ENCODE measurements at regions of chr18 and their contacts with region 1.

Region 1: GRCh38 chr18:42053188-42053781 is 98.3 kb downstream of the PIK3C3 start:
- DNase-seq: peak; percentile 63
- H3K4me3 Mint-ChIP-seq: no peak overlapping the region
- H3K27ac Mint-ChIP-seq: no peak overlapping the region
- H3K4me1 Mint-ChIP-seq: peaks cover 9% of the 10 kb centered on the region
- H3K27me3 Mint-ChIP-seq: no peaks in the 10 kb centered on the region

Region 2: GRCh38 chr18:41938445-41938844 is 114.8 kb before region 1 on chr18:
- CTCF ChIA-PET with region 1: no interaction called
- POLR2A ChIA-PET with region 1: no interaction called
- intact Hi-C with region 1: no loop called
- DNase-seq: no peak
- H3K4me3 Mint-ChIP-seq: no peak overlapping the region
- H3K27ac Mint-ChIP-seq: no peak overlapping the region
- H3K4me1 Mint-ChIP-seq: peaks cover 9% of the 10 kb centered on the region
- H3K27me3 Mint-ChIP-seq: peaks cover 12% of the 10 kb centered on the region

Region 3: GRCh38 chr18:42028247-42028832 is 24.9 kb before region 1 on chr18:
- CTCF ChIA-PET with region 1: interaction called, 11 read pairs
- POLR2A ChIA-PET with region 1: no interaction called
- intact Hi-C with region 1: no loop called
- DNase-seq: peak; percentile 23
- H3K4me3 Mint-ChIP-seq: no peak overlapping the region
- H3K27ac Mint-ChIP-seq: no peak overlapping the region
- H3K4me1 Mint-ChIP-seq: peaks cover 28% of the 10 kb centered on the region
- H3K27me3 Mint-ChIP-seq: no peaks in the 10 kb centered on the region

Region 4: DNA sequence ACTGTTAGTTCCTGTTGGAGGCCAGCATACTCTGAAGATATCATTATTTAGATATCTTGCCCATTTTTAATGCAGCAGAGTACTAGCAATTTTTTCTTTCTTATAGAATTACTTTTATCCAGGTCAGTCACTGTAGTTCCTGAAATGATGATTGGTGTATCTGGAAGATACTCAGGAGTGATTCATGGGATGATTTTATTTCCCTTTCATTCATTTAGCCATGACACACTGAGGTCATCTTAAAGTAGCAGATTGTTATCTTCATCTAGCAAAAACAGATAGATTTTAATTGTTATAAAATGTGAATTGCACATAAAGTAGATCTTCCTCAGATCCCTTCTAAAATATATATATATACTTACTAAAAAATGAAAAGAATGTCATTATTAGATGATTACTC is 10.8 kb after region 1 on chr18:
- CTCF ChIA-PET with region 1: interaction called, 19 read pairs
- POLR2A ChIA-PET with region 1: no interaction called
- intact Hi-C with region 1: no loop called
- DNase-seq: no peak
- H3K4me3 Mint-ChIP-seq: no peak overlapping the region
- H3K27ac Mint-ChIP-seq: no peak overlapping the region
- H3K4me1 Mint-ChIP-seq: peaks cover 4% of the 10 kb centered on the region
- H3K27me3 Mint-ChIP-seq: no peaks in the 10 kb centered on the region

Region 5: GRCh38 chr18:42082415-42083234 is 29.3 kb after region 1 on chr18:
- CTCF ChIA-PET with region 1: interaction called, 10 read pairs
- POLR2A ChIA-PET with region 1: no interaction called
- intact Hi-C with region 1: no loop called
- DNase-seq: no peak
- H3K4me3 Mint-ChIP-seq: no peak overlapping the region
- H3K27ac Mint-ChIP-seq: peak overlapping the region; percentile 67
- H3K4me1 Mint-ChIP-seq: peaks cover 15% of the 10 kb centered on the region
- H3K27me3 Mint-ChIP-seq: no peaks in the 10 kb centered on the region

Region 6: GRCh38 chr18:42274488-42275137 is 221.3 kb after region 1 on chr18:
- CTCF ChIA-PET with region 1: interaction called, 4 read pairs
- POLR2A ChIA-PET with region 1: no interaction called
- intact Hi-C with region 1: loop called (anchors 1 kb)
- DNase-seq: no peak
- H3K4me3 Mint-ChIP-seq: no peak overlapping the region
- H3K27ac Mint-ChIP-seq: no peak overlapping the region
- H3K4me1 Mint-ChIP-seq: no peaks in the 10 kb centered on the region
- H3K27me3 Mint-ChIP-seq: no peaks in the 10 kb centered on the region

Region 7: DNA sequence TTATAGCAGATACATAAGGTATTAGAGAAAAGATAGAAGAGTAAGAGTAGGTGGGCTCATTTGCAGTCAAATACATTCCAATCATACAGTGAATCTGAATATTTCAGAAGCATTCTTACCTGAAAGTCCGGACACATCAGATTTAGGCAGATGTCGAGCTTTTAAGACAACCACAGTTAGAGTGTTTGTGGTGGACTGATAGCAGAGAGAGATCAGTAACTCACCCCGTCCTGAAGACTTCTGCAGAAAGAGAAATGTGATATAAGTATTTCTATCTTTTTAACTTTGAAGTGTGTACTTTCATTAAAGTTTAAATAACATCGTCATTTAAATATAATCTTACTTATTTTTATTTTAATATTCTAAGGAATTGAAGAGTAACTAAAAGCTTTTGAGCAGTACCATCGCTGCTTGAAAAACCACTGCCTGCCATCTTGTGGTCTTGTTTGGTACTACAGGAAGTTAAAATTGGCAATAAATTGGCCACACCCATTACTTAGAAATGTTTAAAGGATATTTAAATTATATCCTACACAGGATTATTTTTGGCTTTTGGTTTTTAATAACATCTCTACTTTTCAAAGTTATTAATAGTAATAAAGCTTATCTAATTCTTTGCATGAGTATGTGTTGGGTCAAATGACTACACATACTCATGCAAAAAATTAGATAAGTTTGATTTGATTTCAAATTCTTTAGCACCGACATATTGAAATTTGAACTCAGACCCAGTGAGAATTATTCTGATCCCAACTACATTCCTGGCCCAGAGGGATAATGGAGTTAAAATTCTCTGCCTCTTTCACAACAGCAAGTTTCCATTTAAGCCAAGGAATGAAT is 1218.5 kb after region 1 on chr18:
- CTCF ChIA-PET with region 1: interaction called, 4 read pairs
- POLR2A ChIA-PET with region 1: no interaction called
- intact Hi-C with region 1: loop called (anchors 1 kb)
- DNase-seq: no peak
- H3K4me3 Mint-ChIP-seq: no peak overlapping the region
- H3K27ac Mint-ChIP-seq: no peak overlapping the region
- H3K4me1 Mint-ChIP-seq: no peaks in the 10 kb centered on the region
- H3K27me3 Mint-ChIP-seq: no peaks in the 10 kb centered on the region